Mucosa of descending colon (tissue), 3 donors: ENCODE measurements at regions of chr1 and their contacts with region 1.

Region 1: DNA sequence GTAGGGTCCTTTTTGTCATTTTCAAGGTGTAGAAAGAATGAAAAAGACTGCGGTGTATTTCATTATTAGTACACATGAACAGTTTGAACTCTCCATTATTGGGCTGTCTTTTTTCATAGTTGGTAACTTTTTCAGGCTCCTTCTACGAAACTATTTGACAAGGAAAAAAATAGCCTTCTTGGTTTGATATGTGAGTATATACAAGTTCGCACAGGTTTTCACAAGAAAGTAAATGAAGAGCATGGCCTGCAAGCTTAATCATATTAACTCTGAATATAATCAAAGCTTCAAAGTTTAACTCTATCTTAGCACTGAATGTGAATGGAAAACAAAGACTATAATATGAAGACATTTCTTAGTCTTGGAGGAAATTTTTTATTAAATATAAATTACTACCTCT is 290.0 kb upstream of the ADGRL2 start:
- DNase-seq: no peak
- ATAC-seq: no peak
- H3K4me3 ChIP-seq: no peak overlapping the region
- H3K4me1 ChIP-seq: no peaks in the 10 kb centered on the region
- CTCF ChIP-seq: no peak

Region 2: DNA sequence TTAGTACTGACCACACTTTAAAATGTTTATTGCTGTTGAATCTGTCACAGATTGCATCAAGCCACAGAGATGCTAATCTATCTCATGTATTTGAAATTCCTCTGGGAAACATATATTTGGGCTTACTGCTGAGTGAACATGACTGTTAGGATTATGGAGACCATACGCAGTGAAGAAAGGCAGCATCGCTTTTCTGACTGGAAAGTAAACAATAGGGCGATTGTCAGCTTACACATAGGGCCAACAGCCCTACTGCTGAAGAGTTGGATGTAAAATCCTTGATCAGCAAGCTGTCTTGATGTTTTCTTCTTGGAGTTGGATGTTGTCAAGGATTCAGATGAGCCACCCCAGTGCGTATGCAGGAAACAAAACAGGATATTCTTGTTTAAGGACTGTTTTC is 78.6 kb before region 1 on chr1:
- intact Hi-C with region 1: loop called in 1 of 2 experiments (anchors 2 kb)
- DNase-seq: no peak
- ATAC-seq: no peak
- H3K4me3 ChIP-seq: no peak overlapping the region
- H3K4me1 ChIP-seq: peaks cover 14% of the 10 kb centered on the region
- CTCF ChIP-seq: no peak

Region 3: GRCh38 chr1:81781749-81782148 is 271.0 kb after region 1 on chr1:
- intact Hi-C with region 1: no loop called
- DNase-seq: no peak
- ATAC-seq: no peak
- H3K4me3 ChIP-seq: no peak overlapping the region
- H3K4me1 ChIP-seq: no peaks in the 10 kb centered on the region
- CTCF ChIP-seq: no peak